Activated CD4-positive, alpha-beta memory T cell treated with anti-CD3 and anti-CD28 coated beads for 36 hours (primary cell): ENCODE measurements at regions of chr11 and their contacts with region 1.

Region 1: DNA sequence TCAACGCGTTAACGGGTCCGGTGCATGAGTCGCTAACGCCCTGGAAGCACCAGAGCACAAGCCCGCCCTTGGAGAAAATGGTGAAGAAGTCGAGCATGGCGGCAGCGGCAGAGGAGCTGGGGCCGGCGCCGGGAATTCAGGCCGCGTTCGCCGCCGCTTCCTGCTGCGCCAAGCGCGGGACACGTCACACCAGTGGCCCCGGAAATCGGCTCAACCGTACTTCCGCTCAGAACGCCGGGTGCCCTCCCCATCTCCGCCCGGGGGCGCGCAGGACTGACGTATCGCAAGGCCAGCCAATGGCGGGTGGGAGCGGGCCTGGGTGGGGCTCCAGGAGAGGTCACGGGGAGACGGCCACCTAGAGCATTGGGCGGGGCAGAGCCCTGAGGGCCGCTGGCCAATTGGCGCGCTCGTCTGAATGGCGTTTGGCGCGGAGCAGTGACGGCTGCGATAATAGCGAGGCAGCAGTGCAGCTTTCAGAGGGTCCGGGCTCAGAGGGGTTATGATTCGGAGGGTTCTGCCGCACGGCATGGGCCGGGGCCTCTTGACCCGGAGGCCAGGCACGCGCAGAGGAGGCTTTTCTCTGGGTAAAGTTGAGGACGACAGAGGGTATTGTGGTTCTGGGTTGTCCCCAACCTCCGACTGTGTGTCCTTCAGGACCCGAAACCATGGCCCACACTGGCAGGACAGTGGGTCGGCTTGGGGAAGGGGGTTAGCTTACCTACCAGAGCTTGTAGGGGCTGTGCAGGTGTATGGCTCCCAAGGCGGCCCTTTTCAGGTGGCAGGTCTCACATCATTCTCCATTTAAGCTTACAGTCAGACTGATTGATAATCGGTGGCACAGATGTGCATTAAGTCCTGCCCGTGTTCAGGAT is at the starts of genes FOXRED1 and SRPRA:
- DNase-seq: peak; percentile 100
- H3K4me3 Mint-ChIP-seq: peak within 1 kb of the TSS; percentile 92
- H3K27ac Mint-ChIP-seq: peak within 1 kb of the TSS; percentile 94
- H3K4me1 Mint-ChIP-seq: peaks cover 33% of the 10 kb centered on the region
- H3K27me3 Mint-ChIP-seq: no peaks in the 10 kb centered on the region
- total RNA-seq, gene FOXRED1: 41.7 to 42.3 TPM
- total RNA-seq, gene SRPRA: 142 to 149 TPM

Region 2: DNA sequence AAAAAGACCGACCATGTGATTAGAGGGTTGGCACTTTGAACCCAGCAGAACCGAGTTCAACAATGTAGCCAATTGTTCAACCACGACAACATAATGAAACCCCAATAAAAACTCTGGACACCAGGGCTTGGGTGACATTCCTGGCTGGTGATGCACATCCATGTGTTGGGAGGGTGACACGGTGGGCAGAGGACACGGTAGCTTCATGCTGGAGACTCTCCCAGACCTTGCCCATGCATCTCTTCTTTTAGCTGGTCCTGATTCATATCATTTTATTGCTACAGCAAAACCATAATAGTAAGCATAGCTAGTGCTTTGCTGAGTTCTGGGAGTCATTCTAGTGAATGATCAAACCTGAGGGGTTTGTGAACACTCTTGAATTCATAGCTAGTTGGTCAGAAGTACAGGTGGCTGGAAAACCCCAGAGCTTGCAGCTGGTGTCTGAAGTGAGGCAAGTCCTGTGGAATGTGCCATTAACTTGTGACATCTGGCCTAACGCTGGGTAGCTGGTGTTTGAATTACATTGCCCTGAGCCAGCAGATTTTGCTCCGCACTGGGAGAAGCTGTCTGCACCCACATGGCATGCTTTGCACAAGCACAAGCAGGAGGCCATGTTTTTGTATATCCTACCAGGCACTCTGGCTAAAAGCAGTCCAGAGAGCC is 71.5 kb before region 1 on chr11:
- CTCF ChIA-PET with region 1: no interaction called
- POLR2A ChIA-PET with region 1: no interaction called
- intact Hi-C with region 1: no loop called
- DNase-seq: no peak
- H3K4me3 Mint-ChIP-seq: no peak overlapping the region
- H3K27ac Mint-ChIP-seq: no peak overlapping the region
- H3K4me1 Mint-ChIP-seq: no peaks in the 10 kb centered on the region
- H3K27me3 Mint-ChIP-seq: no peaks in the 10 kb centered on the region

Region 3: DNA sequence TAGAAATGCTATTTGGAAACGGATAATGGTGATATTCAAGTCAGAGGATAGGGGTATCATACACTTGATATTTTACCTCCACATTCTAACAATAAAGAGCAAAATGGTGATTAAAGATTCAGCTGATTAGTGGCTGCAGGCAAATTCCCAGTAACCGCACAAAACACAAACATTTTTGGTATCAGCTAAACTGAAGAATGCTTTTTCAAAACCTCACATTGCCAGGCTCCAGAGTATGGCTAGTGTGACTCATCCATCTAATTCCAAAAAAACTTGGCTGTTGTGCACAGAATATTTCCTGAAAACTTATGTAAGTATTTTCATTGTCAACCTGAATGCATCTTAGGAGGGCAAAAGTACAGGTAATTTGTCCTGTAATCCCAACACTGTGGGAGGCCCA is 11.2 kb before region 1 on chr11:
- CTCF ChIA-PET with region 1: no interaction called
- POLR2A ChIA-PET with region 1: no interaction called
- intact Hi-C with region 1: no loop called
- DNase-seq: no peak
- H3K4me3 Mint-ChIP-seq: no peak overlapping the region
- H3K27ac Mint-ChIP-seq: no peak overlapping the region
- H3K4me1 Mint-ChIP-seq: no peaks in the 10 kb centered on the region
- H3K27me3 Mint-ChIP-seq: no peaks in the 10 kb centered on the region

Region 4: GRCh38 chr11:126282736-126283591 is 14.0 kb after region 1 on chr11 and contains the start of gene TIRAP:
- CTCF ChIA-PET with region 1: interaction called, 3 read pairs
- POLR2A ChIA-PET with region 1: interaction called, 41 read pairs
- intact Hi-C with region 1: loop called (anchors 1 kb)
- DNase-seq: peak; percentile 73
- H3K4me3 Mint-ChIP-seq: peak within 1 kb of the TSS; percentile 97
- H3K27ac Mint-ChIP-seq: peak within 1 kb of the TSS; percentile 91
- H3K4me1 Mint-ChIP-seq: peaks cover 39% of the 10 kb centered on the region
- H3K27me3 Mint-ChIP-seq: no peaks in the 10 kb centered on the region
- total RNA-seq, gene TIRAP: 7.3 to 8.8 TPM